Posterior vena cava (tissue), 2 donors: ENCODE measurements at regions of chr6 and their contacts with region 1.

Region 1: GRCh38 chr6:159577564-159577963 is 115.5 kb downstream of the SOD2 start:
- DNase-seq: no peak

Region 2: DNA sequence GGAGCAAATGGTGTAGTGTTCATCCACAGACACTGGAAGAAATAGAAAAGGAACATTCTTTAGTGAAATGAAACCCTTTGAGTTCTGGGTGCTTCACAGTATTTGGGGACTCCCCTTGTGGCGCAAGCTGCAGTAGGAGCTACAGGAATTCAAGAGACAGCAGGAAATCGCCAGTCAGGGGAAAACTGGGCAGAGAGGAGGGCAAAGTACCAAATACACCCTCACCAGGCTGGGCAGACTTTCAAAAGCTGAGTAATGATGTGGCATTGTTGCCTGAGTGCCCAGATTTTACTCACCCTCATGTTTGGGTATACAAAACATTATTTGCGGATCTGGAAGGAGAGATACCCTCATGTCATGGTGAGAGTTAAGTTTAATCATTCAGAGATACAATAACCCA is 17.6 kb after region 1 on chr6:
- intact Hi-C with region 1: loop called in 1 of 2 experiments (anchors 1 kb)
- DNase-seq: no peak

Region 3: DNA sequence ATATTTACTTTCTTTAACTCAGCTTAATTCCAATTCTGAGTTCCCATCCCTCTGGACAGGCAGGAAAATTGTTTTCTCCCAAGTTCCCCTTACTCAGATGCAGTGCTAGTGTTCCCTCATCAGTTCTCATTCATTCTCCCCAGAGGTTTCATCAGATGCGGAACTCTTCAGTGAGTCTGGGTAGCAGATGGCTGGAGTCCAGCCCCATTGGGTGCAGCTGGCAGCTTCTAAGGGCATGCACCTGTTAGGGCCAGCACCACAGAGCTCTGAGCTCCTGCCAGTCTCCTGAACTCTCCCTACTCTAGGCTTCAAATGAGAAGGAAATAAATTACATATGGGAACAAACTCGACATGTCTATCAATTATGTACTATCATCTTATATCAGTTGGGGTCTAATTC is 38.9 kb after region 1 on chr6:
- intact Hi-C with region 1: no loop called
- DNase-seq: no peak